ENCODE measurements at regions of chr2 and their contacts with region 1.

Region 1: GRCh38 chr2:101151141-101151858 is at the start of gene TBC1D8:
- DNase-seq: peak; percentile 82
- H3K4me3 Mint-ChIP-seq: peak within 1 kb of the TSS; percentile 91
- H3K27ac Mint-ChIP-seq: peak within 1 kb of the TSS; percentile 55
- H3K4me1 Mint-ChIP-seq: peaks cover 54% of the 10 kb centered on the region
- H3K27me3 Mint-ChIP-seq: no peaks in the 10 kb centered on the region
- CTCF ChIP-seq: no peak
- total RNA-seq, gene TBC1D8: 48.1 and 50.9 TPM in 2 replicates

Region 2: GRCh38 chr2:101007415-101008345 is 143.6 kb before region 1 on chr2:
- CTCF ChIA-PET with region 1: interaction called, 40 read pairs
- POLR2A ChIA-PET with region 1: interaction called, 37 read pairs
- intact Hi-C with region 1: loop called (anchors 1 kb)
- DNase-seq: no peak
- H3K4me3 Mint-ChIP-seq: no peak overlapping the region
- H3K27ac Mint-ChIP-seq: no peak overlapping the region
- H3K4me1 Mint-ChIP-seq: peaks cover 17% of the 10 kb centered on the region
- H3K27me3 Mint-ChIP-seq: no peaks in the 10 kb centered on the region
- CTCF ChIP-seq: no peak

Region 3: DNA sequence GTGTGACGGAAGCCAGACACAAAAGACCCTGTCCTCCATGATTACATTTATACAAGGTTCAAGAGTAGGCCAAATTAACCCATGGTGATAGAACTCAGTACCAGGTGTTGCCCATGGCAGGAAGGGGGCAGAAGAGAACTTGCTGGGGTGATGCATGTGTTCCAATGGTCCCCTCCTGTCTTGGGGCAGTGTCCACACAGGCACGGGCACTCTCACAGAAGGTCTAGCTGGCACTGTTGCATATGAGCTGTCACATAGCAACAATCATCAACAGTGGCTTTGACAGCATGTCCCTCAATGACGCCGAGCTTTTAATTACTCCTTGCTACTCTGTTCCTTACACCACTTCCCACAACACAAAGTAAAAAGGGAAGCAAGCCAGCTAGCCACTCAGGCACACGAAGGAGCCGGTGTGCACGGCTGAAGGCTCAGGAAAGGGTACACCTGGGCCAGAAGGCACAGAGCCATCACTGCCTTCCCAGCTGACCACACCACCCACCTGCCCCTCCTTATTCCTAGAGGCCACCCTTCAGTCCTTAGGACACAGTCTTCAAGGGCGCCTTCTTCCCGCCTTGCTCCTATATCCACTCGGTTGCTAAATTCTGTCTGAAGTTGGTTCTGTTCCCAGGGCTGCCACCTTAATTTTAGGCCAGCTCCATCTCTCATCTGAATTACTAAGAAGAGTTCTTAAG is 120.3 kb before region 1 on chr2:
- CTCF ChIA-PET with region 1: interaction called, 79 read pairs
- POLR2A ChIA-PET with region 1: interaction called, 4 read pairs
- intact Hi-C with region 1: loop called (anchors 1 kb)
- DNase-seq: no peak
- H3K4me3 Mint-ChIP-seq: no peak overlapping the region
- H3K27ac Mint-ChIP-seq: no peak overlapping the region
- H3K4me1 Mint-ChIP-seq: no peaks in the 10 kb centered on the region
- H3K27me3 Mint-ChIP-seq: no peaks in the 10 kb centered on the region
- CTCF ChIP-seq: no peak

Region 4: GRCh38 chr2:101064868-101065549 is 86.3 kb before region 1 on chr2:
- CTCF ChIA-PET with region 1: interaction called, 10 read pairs
- POLR2A ChIA-PET with region 1: interaction called, 26 read pairs
- intact Hi-C with region 1: loop called (anchors 1 kb)
- DNase-seq: peak; percentile 76
- H3K4me3 Mint-ChIP-seq: peak overlapping the region; percentile 48
- H3K27ac Mint-ChIP-seq: peak overlapping the region; percentile 85
- H3K4me1 Mint-ChIP-seq: peaks cover 47% of the 10 kb centered on the region
- H3K27me3 Mint-ChIP-seq: no peaks in the 10 kb centered on the region
- CTCF ChIP-seq: no peak

Region 5: DNA sequence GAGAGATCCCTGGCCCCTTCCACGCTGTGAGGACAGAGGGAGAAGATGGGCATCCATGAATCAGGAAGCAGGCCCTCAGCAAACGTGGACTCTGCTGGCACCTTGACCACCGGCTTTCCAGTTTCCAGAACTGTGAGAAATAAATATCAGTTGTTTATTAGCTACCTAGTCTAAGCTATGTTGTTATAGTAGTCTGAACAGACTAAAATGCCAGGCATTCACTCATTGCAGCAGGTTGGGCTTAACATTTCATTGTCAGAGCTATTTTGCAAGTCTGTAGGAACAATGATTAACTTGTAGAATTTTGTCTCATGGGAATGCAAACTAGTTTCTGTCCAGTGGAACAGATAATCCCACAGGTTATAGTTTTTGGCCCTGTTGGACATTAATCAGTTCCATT is 24.7 kb after region 1 on chr2:
- CTCF ChIA-PET with region 1: interaction called, 4 read pairs
- POLR2A ChIA-PET with region 1: interaction called, 13 read pairs
- intact Hi-C with region 1: no loop called
- DNase-seq: no peak
- H3K4me3 Mint-ChIP-seq: no peak overlapping the region
- H3K27ac Mint-ChIP-seq: no peak overlapping the region
- H3K4me1 Mint-ChIP-seq: peaks cover 14% of the 10 kb centered on the region
- H3K27me3 Mint-ChIP-seq: no peaks in the 10 kb centered on the region
- CTCF ChIP-seq: no peak

Region 6: GRCh38 chr2:101252408-101253012 is 101.2 kb after region 1 on chr2 and contains the start of gene CNOT11:
- CTCF ChIA-PET with region 1: interaction called, 4 read pairs
- POLR2A ChIA-PET with region 1: interaction called, 8 read pairs
- intact Hi-C with region 1: loop called (anchors 5 kb)
- DNase-seq: peak; percentile 97
- H3K4me3 Mint-ChIP-seq: peak within 1 kb of the TSS; percentile 93
- H3K27ac Mint-ChIP-seq: peak within 1 kb of the TSS; percentile 84
- H3K4me1 Mint-ChIP-seq: peaks cover 27% of the 10 kb centered on the region
- H3K27me3 Mint-ChIP-seq: no peaks in the 10 kb centered on the region
- CTCF ChIP-seq: no peak
- total RNA-seq, gene CNOT11: 33.4 and 38.5 TPM in 2 replicates

Measured in MCF 10A (cell line).